Uterus (tissue), 4 donors: ENCODE measurements at regions of chr3 and their contacts with region 1.

Region 1: DNA sequence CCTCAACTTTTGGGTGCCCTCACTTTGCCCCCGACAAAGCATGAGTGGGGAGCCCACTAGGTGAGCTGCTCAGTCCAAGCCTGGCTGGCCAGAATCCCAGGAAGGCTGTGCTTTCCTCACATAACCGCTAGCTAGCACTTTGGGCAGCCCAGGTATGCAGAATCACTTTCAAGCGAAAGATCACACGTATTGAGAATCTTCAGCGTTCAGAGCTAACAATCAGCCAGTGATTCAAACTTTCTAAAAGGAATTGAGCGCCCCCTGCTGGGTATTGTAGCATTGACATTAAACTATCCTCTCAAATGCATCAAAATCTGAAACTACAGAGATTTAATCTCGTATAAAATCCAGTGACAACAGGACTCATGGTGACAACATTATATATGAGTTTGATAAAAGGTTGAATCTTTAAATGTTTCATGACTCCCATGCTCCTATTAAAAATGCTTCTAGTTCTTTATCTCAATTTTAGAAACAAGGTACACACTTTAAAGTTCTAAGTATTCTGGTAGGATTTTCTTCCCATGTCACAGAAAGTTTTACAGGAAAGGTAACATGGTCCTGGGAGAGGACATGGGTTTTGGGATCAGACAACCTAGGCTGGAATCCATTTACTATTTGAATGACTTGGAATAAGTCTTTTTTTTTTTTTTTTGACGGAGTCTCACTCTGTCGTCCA is 11.8 kb downstream of the ANAPC13 start:
- DNase-seq: peak; percentile 68 to 87
- H3K4me3 ChIP-seq: no peak overlapping the region
- H3K27ac ChIP-seq: no peak overlapping the region
- H3K4me1 ChIP-seq: no peaks in the 10 kb centered on the region
- H3K27me3 ChIP-seq: no peaks in the 10 kb centered on the region
- CTCF ChIP-seq: peak; percentile 80 to 87 (median 82)
- POLR2A ChIP-seq: no peak

Region 2: GRCh38 chr3:134201201-134202130 is 272.5 kb before region 1 on chr3:
- intact Hi-C with region 1: loop called (anchors 10 kb)
- DNase-seq: no peak
- H3K4me3 ChIP-seq: no peak overlapping the region
- H3K27ac ChIP-seq: no peak overlapping the region
- H3K4me1 ChIP-seq: no peaks in the 10 kb centered on the region
- H3K27me3 ChIP-seq: no peaks in the 10 kb centered on the region
- CTCF ChIP-seq: no peak
- POLR2A ChIP-seq: no peak

Region 3: GRCh38 chr3:134864636-134865035 is 390.6 kb after region 1 on chr3:
- intact Hi-C with region 1: no loop called
- DNase-seq: peak in 1 of 2 donors; percentile 38
- H3K4me3 ChIP-seq: no peak overlapping the region
- H3K27ac ChIP-seq: no peak overlapping the region
- H3K4me1 ChIP-seq: no peaks in the 10 kb centered on the region
- H3K27me3 ChIP-seq: no peaks in the 10 kb centered on the region
- CTCF ChIP-seq: no peak
- POLR2A ChIP-seq: no peak